Activated CD4-positive, alpha-beta T cell treated with anti-CD3 and anti-CD28 coated beads for 36 hours (primary cell): ENCODE measurements at regions of chr1 and their contacts with region 1.

Region 1: DNA sequence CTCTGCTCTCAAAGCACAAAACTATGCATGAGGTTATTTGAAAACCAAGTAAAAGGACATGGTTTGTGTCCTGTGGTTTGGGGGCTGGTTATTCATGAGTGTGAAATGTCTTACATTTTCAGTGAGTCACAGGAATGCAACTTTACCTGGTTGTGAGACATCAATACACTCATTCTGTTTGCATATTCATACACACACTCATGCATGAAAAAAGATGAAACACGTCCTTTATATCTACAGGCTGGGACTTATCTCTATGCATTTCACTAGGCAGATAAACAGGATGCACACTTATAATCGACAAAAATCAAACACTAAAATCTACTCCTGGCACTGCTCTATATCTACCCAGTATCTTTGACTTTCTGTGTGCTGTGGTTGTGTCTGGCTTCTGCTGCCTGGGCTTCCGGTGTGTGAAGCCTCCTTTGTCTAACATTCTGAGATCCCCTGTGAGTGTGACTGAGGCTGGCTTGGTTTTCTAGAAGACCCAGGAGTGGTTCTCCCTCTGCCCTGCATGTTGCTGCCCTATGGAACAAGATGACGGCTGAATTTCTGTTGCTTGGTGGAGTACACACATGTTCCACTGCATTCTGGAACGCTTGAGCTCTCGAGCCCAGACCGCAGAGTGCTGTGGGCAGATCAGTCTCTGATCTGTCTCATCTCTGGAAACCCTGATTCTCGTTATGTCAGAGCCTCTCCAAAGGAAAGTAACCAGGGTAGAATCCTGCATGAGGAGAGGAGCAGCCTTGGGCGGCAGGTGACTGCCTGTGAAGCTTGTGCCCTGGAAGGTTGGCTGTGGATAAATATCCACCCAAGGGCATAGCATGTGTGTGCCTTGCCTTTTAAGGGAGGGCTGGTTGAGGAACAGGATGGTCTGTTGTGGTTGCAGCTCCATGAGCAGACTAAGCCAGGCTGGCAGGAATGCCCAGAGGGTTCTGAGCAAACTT is 19.7 kb upstream of the FASLG start:
- DNase-seq: peak; percentile 91
- ATAC-seq: peak; percentile 83
- H3K4me3 Mint-ChIP-seq: peak overlapping the region; percentile 56
- H3K27ac Mint-ChIP-seq: peak overlapping the region; percentile 99
- H3K4me1 Mint-ChIP-seq: peaks cover 73% of the 10 kb centered on the region
- H3K27me3 Mint-ChIP-seq: peaks cover 22% of the 10 kb centered on the region

Region 2: GRCh38 chr1:172588296-172589291 is 50.6 kb before region 1 on chr1:
- CTCF ChIA-PET with region 1: no interaction called
- POLR2A ChIA-PET with region 1: no interaction called
- intact Hi-C with region 1: loop called (anchors 1 to 2 kb)
- DNase-seq: peak; percentile 48
- ATAC-seq: peak; percentile 95
- H3K4me3 Mint-ChIP-seq: no peak overlapping the region
- H3K27ac Mint-ChIP-seq: peak overlapping the region; percentile 28
- H3K4me1 Mint-ChIP-seq: peaks cover 25% of the 10 kb centered on the region
- H3K27me3 Mint-ChIP-seq: no peaks in the 10 kb centered on the region

Region 3: GRCh38 chr1:172671591-172671990 is 32.4 kb after region 1 on chr1:
- CTCF ChIA-PET with region 1: interaction called, 4 read pairs
- POLR2A ChIA-PET with region 1: interaction called, 25 read pairs
- intact Hi-C with region 1: loop called (anchors 1 kb)
- DNase-seq: no peak
- ATAC-seq: no peak
- H3K4me3 Mint-ChIP-seq: no peak overlapping the region
- H3K27ac Mint-ChIP-seq: no peak overlapping the region
- H3K4me1 Mint-ChIP-seq: peaks cover 71% of the 10 kb centered on the region
- H3K27me3 Mint-ChIP-seq: peaks cover 11% of the 10 kb centered on the region

Region 4: GRCh38 chr1:172719694-172720138 is 80.6 kb after region 1 on chr1:
- CTCF ChIA-PET with region 1: interaction called, 39 read pairs
- POLR2A ChIA-PET with region 1: interaction called, 5 read pairs
- intact Hi-C with region 1: loop called (anchors 2 kb)
- DNase-seq: no peak
- ATAC-seq: peak; percentile 51
- H3K4me3 Mint-ChIP-seq: no peak overlapping the region
- H3K27ac Mint-ChIP-seq: no peak overlapping the region
- H3K4me1 Mint-ChIP-seq: peaks cover 35% of the 10 kb centered on the region
- H3K27me3 Mint-ChIP-seq: peaks cover 6% of the 10 kb centered on the region

Region 5: GRCh38 chr1:172837816-172838680 is 198.9 kb after region 1 on chr1:
- CTCF ChIA-PET with region 1: no interaction called
- POLR2A ChIA-PET with region 1: no interaction called
- intact Hi-C with region 1: loop called in 1 of 2 experiments (anchors 1 kb)
- DNase-seq: peak; percentile 29
- ATAC-seq: peak; percentile 99
- H3K4me3 Mint-ChIP-seq: no peak overlapping the region
- H3K27ac Mint-ChIP-seq: no peak overlapping the region
- H3K4me1 Mint-ChIP-seq: peaks cover 25% of the 10 kb centered on the region
- H3K27me3 Mint-ChIP-seq: peaks cover 48% of the 10 kb centered on the region

Region 6: DNA sequence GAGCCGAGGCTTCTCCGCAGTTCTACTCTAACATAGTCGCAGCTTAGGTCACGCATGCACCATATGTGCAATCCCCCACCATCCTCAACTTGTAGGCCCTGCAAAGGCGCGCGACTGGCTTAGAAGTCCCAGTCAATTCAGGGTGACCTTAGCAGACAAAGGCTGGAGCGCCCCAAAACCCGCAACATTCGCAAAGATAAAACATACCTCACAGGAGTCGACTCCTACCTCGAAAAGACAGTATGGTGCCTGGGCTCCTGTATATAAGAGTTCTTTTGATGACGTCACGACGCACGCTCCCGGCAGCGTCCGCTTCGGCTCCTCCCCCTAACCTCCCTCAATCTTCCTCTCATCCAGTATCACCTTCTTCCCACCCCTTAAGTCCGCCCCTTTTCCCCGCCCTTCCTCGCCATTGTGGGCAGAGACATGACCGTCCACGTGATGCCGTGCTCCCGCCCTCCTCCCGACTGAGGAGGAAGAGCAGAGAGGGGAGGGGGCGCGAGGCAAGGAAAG is 1228.7 kb after region 1 on chr1 and contains the start of gene GAS5:
- CTCF ChIA-PET with region 1: no interaction called
- POLR2A ChIA-PET with region 1: interaction called, 3 read pairs
- intact Hi-C with region 1: loop called in 1 of 2 experiments (anchors 2 kb)
- DNase-seq: peak; percentile 100
- ATAC-seq: peak; percentile 82
- H3K4me3 Mint-ChIP-seq: peak within 1 kb of the TSS; percentile 91
- H3K27ac Mint-ChIP-seq: peak within 1 kb of the TSS; percentile 97
- H3K4me1 Mint-ChIP-seq: peaks cover 57% of the 10 kb centered on the region
- H3K27me3 Mint-ChIP-seq: no peaks in the 10 kb centered on the region
- total RNA-seq, gene GAS5: 878 to 1,203 TPM